Activated naive CD4-positive, alpha-beta T cell treated with anti-CD3 and anti-CD28 coated beads for 36 hours (primary cell): ENCODE measurements at regions of chr5 and their contacts with region 1.

Region 1: DNA sequence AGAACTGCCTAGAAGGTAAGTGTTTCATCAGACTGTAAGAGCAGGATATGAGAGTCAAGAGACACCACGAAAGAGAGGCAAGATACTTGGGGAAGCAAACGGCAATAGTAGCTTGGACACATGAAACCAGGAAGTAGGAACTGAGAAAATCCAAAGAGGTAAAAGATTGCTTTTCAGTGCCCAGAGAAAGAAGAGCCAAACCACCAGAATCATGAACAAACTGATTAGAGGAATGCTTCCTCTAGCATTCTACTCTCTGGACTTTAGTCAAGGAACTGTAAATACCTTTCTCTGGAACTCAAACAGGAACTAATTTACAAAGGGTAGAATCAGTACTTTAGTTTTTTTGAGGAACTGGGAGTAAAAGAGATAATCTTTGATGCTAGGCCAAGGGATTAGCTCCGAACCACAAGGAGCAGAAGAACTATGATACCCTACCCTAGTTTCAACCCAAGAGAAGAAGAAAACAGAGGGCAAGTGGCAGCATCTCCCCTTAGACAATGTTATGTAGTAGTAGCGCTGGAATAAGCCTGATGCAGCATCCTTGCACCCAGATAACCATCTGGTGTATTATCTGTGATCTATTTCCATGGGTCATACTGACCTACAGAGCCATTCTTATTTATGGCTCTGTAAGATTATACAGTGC is 41.3 kb downstream of the EFCAB9 start:
- DNase-seq: no peak
- H3K4me3 Mint-ChIP-seq: no peak overlapping the region
- H3K27ac Mint-ChIP-seq: no peak overlapping the region
- H3K4me1 Mint-ChIP-seq: peaks cover 38% of the 10 kb centered on the region
- H3K27me3 Mint-ChIP-seq: no peaks in the 10 kb centered on the region

Region 2: GRCh38 chr5:172223901-172224873 is 11.1 kb before region 1 on chr5:
- CTCF ChIA-PET with region 1: interaction called, 4 read pairs
- intact Hi-C with region 1: loop called (anchors 2 kb)
- DNase-seq: peak; percentile 70
- H3K4me3 Mint-ChIP-seq: peak overlapping the region; percentile 11
- H3K27ac Mint-ChIP-seq: peak overlapping the region; percentile 37
- H3K4me1 Mint-ChIP-seq: peaks cover 30% of the 10 kb centered on the region
- H3K27me3 Mint-ChIP-seq: no peaks in the 10 kb centered on the region